ENCODE measurements at regions of chr15 and their contacts with region 1.

Region 1: DNA sequence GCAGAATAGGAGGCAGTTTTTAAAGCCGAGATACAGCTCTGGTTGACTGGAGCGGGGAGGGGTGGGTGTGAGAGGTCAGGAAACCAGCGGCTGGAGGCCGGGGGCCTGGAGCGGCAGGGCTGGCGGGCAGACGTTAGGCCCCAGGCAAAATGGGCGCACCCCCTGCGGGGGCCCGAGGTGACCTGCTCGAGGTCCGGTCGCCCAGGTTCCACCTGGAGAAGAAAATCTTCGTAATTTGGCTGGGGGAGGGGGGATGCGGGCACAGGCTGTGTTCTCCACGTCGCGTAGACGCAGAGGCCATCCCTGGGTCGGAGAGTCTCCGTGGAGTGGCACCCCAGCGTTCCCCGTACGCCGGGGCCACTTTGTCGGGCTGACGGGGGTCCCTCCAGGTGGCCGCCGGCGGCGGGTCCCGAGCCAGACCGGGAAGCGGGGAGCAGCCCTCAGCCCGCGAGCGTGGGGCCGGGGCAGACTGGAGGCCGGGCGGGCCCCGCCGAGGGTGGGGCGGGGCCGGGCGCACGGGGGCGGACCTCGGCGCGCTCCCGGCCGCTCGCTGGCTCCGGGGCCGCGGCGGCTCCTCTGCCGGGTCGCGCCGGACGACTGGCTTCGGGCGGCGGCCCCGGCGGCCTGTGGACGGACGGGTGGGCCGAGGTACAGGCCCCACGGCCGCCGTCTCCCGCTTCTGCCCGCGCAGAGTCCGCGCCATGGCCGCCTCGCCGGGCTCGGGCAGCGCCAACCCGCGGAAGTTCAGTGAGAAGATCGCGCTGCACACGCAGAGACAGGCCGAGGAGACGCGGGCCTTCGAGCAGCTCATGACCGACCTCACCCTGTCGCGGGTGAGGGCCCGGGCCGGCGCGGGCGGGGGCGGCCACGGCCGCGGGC is at the start of gene CRTC3:
- DNase-seq: peak; percentile 75
- ATAC-seq: peak; percentile 85
- H3K4me3 Mint-ChIP-seq: peak within 1 kb of the TSS; percentile 95
- H3K27ac Mint-ChIP-seq: peak within 1 kb of the TSS; percentile 88
- H3K4me1 Mint-ChIP-seq: peaks cover 45% of the 10 kb centered on the region
- H3K27me3 Mint-ChIP-seq: no peaks in the 10 kb centered on the region
- CTCF ChIP-seq: no peak
- total RNA-seq, gene CRTC3: 54.7 and 65.0 TPM in 2 replicates

Region 2: GRCh38 chr15:90436952-90437351 is 92.7 kb before region 1 on chr15:
- CTCF ChIA-PET with region 1: no interaction called
- POLR2A ChIA-PET with region 1: no interaction called
- intact Hi-C with region 1: no loop called
- DNase-seq: no peak
- ATAC-seq: no peak
- H3K4me3 Mint-ChIP-seq: no peak overlapping the region
- H3K27ac Mint-ChIP-seq: no peak overlapping the region
- H3K4me1 Mint-ChIP-seq: peaks cover 5% of the 10 kb centered on the region
- H3K27me3 Mint-ChIP-seq: no peaks in the 10 kb centered on the region
- CTCF ChIP-seq: no peak

Region 3: DNA sequence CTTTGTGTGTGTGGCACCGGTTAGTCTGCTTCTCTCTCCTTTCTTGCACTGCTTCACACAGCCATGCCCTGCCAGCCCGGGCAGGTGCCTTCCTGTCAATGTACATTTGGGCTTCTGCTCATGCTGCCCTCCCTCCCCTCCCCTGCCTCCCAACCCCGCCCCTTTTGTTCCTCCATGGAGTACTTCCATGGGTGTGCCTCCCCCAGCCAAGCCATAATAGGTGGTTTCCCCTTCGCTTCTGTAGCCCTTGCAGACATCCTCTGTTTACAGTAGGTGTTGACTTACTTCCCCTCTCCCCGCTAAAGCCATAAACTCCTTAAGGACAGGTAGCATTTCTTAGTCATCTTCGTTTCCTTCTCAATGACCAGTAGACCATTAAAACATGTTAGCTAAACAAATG is 31.7 kb before region 1 on chr15:
- CTCF ChIA-PET with region 1: interaction called, 4 read pairs
- POLR2A ChIA-PET with region 1: interaction called, 4 read pairs
- intact Hi-C with region 1: loop called (anchors 2 kb)
- DNase-seq: no peak
- ATAC-seq: no peak
- H3K4me3 Mint-ChIP-seq: no peak overlapping the region
- H3K27ac Mint-ChIP-seq: no peak overlapping the region
- H3K4me1 Mint-ChIP-seq: no peaks in the 10 kb centered on the region
- H3K27me3 Mint-ChIP-seq: no peaks in the 10 kb centered on the region
- CTCF ChIP-seq: no peak

Region 4: DNA sequence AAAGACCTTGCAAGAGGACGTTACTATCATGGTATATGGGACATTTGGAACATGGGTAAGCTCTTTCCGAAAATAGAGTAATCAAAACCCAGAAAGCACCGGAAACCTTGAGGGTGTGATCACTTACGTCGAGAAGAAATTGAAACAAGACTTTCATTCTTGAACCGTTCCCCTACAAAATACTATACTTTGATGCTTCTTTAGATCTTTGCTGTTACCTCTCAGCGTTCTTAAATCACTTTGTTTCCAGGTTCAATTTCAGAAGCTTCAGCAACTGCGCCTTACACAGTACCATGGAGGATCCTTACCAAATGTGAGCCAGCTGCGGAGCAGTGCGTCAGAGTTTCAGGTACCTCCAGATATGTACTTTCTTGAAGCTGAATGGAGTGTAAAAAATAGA is 10.2 kb after region 1 on chr15:
- CTCF ChIA-PET with region 1: no interaction called
- POLR2A ChIA-PET with region 1: interaction called, 11 read pairs
- intact Hi-C with region 1: no loop called
- DNase-seq: no peak
- ATAC-seq: no peak
- H3K4me3 Mint-ChIP-seq: no peak overlapping the region
- H3K27ac Mint-ChIP-seq: no peak overlapping the region
- H3K4me1 Mint-ChIP-seq: peaks cover 32% of the 10 kb centered on the region
- H3K27me3 Mint-ChIP-seq: no peaks in the 10 kb centered on the region
- CTCF ChIP-seq: no peak

Region 5: DNA sequence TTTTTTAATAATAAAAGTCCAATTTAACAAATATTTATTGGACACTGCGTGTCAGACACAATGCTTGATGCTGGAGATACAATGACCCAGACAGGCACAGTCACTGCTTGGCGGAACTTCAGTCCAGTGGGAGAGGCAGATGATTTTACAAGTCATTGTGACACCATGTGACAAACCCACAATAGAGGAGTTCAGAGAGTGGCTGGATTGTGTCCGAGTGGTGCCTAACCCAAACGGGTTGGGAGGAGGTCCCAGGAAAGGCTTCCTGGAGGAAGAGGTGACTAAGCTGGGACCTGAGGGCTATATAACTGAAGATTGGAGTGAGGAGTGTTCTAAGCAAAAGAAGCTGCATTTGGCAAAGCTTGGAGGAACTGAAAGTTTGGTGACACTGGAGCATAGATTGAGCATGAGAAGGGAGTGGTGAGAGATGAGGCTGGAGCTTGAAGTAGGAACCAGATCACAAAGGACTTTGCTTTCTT is 41.5 kb after region 1 on chr15:
- CTCF ChIA-PET with region 1: no interaction called
- POLR2A ChIA-PET with region 1: no interaction called
- intact Hi-C with region 1: loop called (anchors 5 kb)
- DNase-seq: peak; percentile 25
- ATAC-seq: peak; percentile 81
- H3K4me3 Mint-ChIP-seq: peak overlapping the region; percentile 68
- H3K27ac Mint-ChIP-seq: peak overlapping the region; percentile 84
- H3K4me1 Mint-ChIP-seq: peaks cover 61% of the 10 kb centered on the region
- H3K27me3 Mint-ChIP-seq: no peaks in the 10 kb centered on the region
- CTCF ChIP-seq: no peak

Region 6: DNA sequence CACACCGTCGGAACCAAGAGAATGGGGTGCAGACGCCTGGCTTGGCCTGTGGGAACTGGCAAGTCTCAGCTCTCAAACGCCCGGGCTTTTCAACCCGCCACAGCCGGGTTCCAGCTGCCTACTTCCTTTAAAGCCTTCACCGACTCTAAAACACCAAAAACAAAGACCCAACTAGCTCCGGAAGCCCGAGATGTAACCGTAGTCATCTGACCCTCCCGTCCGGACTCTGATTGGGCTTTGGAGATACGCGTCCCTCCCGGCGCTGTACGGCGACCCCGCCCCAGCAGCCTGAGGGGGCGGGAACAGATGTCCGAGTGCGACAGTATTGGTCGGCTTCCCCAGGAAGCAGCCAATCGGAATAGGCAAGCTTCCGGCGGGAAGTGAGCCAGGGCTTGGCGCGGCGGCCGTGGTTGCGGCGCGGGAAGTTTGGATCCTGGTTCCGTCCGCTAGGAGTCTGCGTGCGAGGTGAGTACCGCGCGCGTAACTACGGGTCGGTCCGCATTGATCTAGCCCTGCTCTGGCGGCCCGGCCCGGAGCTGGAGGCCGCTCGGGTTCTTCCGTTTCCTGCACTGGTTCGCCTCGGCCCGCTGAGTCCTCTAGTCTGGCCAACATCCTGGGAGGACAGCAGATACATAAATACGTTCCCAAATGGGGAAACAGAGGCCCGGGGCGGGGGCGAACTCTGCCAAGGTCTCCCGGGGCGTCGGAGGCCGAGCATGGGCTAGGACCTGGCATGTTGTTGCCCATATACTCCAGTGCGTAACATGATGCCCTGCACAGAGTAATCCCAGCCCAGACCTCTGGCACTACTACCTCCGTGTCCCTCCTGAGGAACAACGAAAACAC is 187.6 kb after region 1 on chr15 and contains the start of gene BLM:
- CTCF ChIA-PET with region 1: no interaction called
- POLR2A ChIA-PET with region 1: no interaction called
- intact Hi-C with region 1: loop called (anchors 1 kb)
- DNase-seq: peak; percentile 87
- ATAC-seq: peak; percentile 99
- H3K4me3 Mint-ChIP-seq: peak within 1 kb of the TSS; percentile 96
- H3K27ac Mint-ChIP-seq: peak within 1 kb of the TSS; percentile 94
- H3K4me1 Mint-ChIP-seq: peaks cover 30% of the 10 kb centered on the region
- H3K27me3 Mint-ChIP-seq: no peaks in the 10 kb centered on the region
- CTCF ChIP-seq: no peak
- total RNA-seq, gene BLM: 18.2 and 23.4 TPM in 2 replicates